HEK293T (cell line): ENCODE measurements at regions of chr17 and their contacts with region 1.

Region 1: DNA sequence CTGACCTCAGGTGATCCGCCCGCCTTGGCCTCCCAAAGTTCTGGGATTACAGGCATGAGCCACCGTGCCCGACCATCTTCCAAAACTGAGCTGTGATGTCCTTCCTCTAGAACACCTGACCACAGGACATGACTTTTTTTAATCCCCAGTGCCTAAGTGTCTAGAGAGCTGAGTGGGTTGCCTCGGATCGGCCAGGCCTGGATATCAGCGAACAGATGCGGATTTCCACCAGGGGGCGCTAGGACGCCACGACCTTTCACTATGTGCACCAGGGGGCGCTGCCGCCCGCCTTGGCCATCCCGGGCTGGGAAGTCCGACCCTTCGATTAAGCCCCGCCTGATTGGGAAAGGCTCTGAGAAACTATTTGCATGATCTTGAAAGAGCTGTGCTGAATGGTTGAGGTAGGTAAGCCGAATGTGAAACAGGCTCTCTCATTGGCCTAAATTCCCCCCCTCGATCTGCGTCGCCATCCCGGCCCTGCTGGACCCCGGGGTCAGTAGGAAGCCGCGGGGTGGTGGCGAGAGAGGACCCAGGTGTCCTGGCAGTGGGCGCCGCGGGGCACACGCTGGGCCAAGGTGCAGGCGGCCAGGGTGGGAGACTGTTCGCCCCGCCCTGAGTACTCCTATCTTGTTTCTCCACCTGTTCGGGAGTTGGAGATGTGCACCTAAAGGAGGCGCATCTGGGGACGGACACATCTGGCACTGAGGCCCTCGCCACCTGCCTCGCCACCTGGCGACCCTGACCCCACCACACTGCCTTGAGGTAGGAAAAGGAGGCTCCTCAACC is at the start of gene ACBD4:
- DNase-seq: peak; percentile 92

Region 2: GRCh38 chr17:44487170-44487569 is 648.2 kb before region 1 on chr17:
- CTCF ChIA-PET with region 1: no interaction called
- POLR2A ChIA-PET with region 1: no interaction called
- DNase-seq: no peak

Region 3: DNA sequence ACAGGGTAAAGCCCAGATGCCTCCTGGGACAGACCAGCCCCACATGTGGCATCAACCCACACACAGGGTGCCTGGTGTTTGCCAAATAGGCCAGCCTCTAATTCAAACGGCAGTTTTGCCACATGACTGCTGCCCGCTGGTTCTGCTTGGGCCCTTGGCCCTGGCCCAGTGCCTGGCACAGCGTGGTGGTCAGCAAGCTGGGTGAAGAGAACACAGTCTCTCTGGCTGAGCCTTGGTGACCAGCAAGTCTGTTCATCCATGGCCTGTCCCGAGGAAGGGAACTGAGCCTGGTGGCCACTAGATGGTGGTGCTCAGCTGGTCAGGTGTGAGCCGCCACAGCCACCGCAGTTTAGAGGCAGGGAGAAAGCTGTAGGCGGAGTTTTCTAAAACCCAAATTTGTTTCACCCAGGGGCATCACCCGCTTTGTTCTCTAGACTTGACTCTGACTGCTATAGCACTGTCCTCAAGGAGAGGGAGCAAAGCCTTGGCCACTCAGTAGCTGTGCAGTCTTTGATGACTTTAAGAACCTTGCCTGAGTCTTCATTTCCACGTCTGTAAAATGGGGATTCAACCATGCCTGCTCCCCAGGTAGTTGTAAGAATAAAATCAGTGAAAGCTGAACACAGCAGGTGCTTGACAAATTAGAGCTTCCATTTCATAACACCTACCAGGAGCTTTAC is 215.4 kb before region 1 on chr17:
- CTCF ChIA-PET with region 1: interaction called, 11 read pairs
- POLR2A ChIA-PET with region 1: no interaction called
- DNase-seq: peak; percentile 84

Region 4: GRCh38 chr17:45073414-45074070 is 61.8 kb before region 1 on chr17:
- CTCF ChIA-PET with region 1: no interaction called
- POLR2A ChIA-PET with region 1: no interaction called
- DNase-seq: no peak

Region 5: GRCh38 chr17:45148183-45149036 is 13.0 kb after region 1 on chr17 and contains the start of gene HEXIM1:
- CTCF ChIA-PET with region 1: interaction called, 106 read pairs
- POLR2A ChIA-PET with region 1: interaction called, 69 read pairs
- DNase-seq: peak; percentile 95

Region 6: DNA sequence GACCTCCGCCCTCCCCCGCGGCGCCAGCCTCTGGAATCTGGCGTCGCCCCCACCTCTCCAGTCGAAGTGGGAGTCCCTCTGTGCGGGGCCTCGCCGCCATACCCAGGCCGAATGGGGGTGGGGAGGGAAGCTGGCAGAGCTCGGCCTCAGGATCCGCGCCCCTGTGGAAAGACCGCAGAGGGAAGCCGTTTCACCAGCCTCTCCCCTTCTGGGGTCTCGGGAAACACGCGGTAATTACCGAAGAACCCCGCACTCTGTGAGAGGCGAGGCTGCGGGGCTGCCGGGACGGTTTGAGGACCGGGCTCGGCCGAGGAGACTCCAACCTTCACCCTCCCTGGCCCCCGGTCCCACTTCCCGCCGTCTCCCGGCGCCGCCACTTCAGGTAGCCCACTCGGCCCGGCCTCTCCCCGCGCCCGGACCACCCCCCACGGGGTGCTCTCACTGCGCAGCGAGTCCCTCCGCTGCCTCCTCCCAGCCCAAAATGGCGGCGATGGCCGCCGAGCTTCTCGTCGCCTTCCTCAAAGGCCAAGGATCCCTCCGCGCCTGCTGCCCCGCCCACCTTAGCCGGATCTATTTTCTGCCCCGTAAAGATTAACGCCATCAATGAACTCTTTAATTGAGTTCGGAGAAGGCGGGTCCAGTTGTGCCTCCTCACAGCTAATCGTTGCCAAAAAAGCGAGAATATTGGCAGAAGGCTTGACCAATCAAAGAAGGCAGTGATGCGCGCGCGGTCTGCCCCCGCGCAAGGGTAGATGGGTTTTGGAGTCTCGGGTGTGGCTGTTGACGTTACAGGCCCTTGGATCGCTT is 25.8 kb after region 1 on chr17:
- CTCF ChIA-PET with region 1: interaction called, 31 read pairs
- POLR2A ChIA-PET with region 1: interaction called, 25 read pairs
- DNase-seq: peak; percentile 95

Region 7: GRCh38 chr17:45197555-45198334 is 62.4 kb after region 1 on chr17:
- CTCF ChIA-PET with region 1: interaction called, 78 read pairs
- POLR2A ChIA-PET with region 1: interaction called, 27 read pairs
- DNase-seq: peak; percentile 94

Region 8: DNA sequence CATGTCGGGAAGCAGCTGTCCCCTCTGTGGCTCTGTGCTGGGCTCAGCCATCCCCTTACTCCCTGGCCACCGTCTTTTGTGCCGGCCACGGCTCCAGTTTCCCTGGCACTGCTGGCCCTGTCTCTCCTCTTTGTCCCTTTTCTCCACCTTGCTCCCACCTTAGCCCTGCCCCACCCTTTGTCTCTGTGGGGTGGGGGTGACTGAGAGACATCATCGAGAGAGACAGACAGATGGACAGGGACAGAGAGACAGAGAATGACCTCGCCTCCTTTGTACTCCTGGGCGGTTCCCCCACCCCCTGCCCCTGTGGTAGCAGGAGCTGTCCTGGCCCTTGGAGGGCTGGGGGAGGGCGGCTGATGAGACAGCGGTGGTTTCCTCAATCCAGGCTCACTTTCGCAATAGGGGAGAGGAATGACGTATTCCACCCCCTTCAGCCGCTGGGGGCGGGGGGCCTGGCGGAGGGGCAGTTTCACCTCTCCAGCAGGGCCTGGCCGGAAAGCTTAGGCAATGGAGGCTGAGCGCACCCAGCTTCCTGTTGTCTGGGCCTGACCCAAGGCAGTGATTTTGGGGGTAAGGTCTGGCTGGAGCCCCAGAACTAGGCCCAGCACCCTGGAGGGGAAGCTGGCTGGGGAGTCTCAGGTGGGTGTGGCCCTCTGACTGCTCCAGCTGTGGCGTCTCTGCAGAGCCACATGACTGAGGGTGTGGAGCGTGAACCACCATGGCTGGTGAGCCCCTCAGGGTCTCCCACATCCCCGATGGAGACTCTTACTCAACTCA is 93.6 kb after region 1 on chr17:
- CTCF ChIA-PET with region 1: interaction called, 30 read pairs
- POLR2A ChIA-PET with region 1: no interaction called
- DNase-seq: no peak